HEK293 (cell line): ENCODE measurements at regions of chr10 and their contacts with region 1.

Region 1: GRCh38 chr10:89369156-89370105 is 8.4 kb upstream of the IFIT1B start:
- H3K4me3 ChIP-seq: no peak overlapping the region
- H3K27ac ChIP-seq: no peak overlapping the region
- H3K4me1 ChIP-seq: peaks cover 3% of the 10 kb centered on the region; the same call in 1 of the 2 replicates
- CTCF ChIP-seq: no peak

Region 2: DNA sequence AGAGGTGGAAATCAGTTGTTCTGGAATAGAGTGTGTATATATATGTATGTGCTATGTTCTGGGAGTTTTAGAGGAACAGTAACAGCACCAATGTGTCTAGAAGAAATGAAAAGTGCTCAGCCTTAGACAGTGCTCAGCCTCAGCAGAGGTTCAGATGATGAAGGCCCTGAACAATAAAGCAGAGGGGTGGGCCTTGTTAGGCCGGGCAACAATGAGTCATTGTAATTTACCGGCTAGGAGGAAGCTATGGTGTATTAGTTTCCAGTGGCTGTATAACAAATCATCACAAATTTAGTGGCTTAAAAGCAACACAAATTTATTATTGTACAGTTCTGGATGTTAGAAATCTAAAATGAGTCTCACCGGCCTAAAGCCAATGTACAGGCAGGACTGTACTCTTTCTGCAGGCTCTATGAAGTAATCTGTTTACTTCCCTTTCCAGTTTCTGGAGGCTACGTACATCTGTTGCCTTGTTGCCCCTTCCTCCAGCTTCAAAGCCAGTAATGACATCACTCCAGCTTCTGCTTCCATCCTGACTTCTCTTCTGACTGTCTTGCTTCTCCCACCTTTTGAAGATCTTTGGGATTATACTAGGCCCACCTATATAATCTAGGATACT is 246.9 kb before region 1 on chr10:
- CTCF ChIA-PET with region 1: no interaction called
- POLR2A ChIA-PET with region 1: no interaction called
- H3K4me3 ChIP-seq: no peak overlapping the region
- H3K27ac ChIP-seq: no peak overlapping the region
- H3K4me1 ChIP-seq: no peaks in the 10 kb centered on the region
- CTCF ChIP-seq: no peak

Region 3: DNA sequence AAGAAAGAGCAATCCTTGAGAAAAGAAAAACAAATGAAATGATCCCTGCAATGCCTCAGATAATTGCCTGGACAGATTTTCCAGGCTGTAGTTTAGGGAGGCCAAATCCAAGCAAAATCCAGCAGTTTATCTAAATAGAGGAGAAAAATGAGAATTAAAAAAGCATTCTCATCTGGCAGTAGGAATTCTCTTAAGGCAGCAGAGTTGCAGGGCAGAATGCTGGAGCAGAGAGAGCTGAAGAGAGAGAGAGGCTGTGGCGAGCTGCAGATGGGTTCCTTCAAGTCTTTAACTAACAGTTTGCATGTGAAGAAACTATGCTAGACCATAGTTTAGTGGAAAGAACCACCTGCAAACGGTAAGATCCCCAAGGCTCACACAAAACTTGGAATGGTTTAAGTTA is 111.8 kb before region 1 on chr10:
- CTCF ChIA-PET with region 1: interaction called, 17 read pairs
- POLR2A ChIA-PET with region 1: no interaction called
- H3K4me3 ChIP-seq: no peak overlapping the region
- H3K27ac ChIP-seq: no peak overlapping the region
- H3K4me1 ChIP-seq: no peaks in the 10 kb centered on the region
- CTCF ChIP-seq: no peak

Region 4: GRCh38 chr10:89431977-89432376 is 62.5 kb after region 1 on chr10:
- CTCF ChIA-PET with region 1: no interaction called
- POLR2A ChIA-PET with region 1: no interaction called
- H3K4me3 ChIP-seq: no peak overlapping the region
- H3K27ac ChIP-seq: no peak overlapping the region
- H3K4me1 ChIP-seq: no peaks in the 10 kb centered on the region
- CTCF ChIP-seq: no peak